ENCODE measurements at regions of chr4 and their contacts with region 1.

Region 1: GRCh38 chr4:69881173-69881773 is 21.3 kb upstream of the SULT1E1 start:
- DNase-seq: peak in 1 of 2 donors; percentile 64
- ATAC-seq: peak; percentile 84 to 98 (median 97)
- H3K4me3 ChIP-seq: no peak overlapping the region
- H3K4me3 Mint-ChIP-seq: no peak overlapping the region
- H3K27ac ChIP-seq: no peak overlapping the region
- H3K27ac Mint-ChIP-seq: no peak overlapping the region
- H3K4me1 ChIP-seq: no peaks in the 10 kb centered on the region
- H3K4me1 Mint-ChIP-seq: no peaks in the 10 kb centered on the region
- H3K27me3 ChIP-seq: no peaks in the 10 kb centered on the region
- H3K27me3 Mint-ChIP-seq: peaks cover 0 to 2% of the 10 kb centered on the region in 2 donors
- CTCF ChIP-seq: peak; percentile 96

Region 2: DNA sequence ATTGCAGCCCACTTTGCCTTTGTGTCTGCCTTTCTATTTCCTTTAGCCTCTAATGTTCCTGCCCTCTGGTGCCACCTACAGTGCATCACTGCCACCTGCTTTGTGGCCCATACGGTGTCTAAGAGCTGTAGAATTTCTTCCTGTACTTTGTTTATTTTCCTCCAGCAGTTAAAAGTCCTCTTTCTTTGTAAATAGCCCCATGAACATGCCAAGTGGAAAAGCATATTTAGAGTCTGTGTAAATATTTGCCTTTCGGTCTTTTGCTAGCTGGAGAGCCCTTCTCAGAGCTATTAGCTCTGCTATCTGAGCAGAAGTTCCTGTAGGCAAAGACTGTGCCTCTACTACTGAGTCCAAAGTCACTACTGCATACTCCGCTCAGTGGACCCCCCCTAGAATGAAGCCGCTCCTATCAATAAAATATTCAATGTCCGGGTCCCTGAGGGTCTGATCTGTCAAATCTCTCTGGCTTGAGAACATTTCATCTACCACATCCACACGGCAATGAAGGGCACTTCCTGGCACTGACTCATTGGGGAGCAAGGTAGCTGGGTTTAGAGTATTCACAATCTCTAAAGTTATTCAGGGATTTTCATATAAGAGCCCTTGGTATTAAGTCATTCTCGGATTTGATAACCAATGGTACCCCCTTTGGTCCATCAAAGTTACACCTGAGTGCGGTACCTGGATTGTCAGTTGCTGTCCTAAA is 57.6 kb before region 1 on chr4:
- intact Hi-C with region 1: loop called (anchors 2 kb)
- DNase-seq: peak in 1 of 2 donors; percentile 72
- ATAC-seq: peak; percentile 84 to 99 (median 97)
- H3K4me3 ChIP-seq: no peak overlapping the region
- H3K4me3 Mint-ChIP-seq: no peak overlapping the region
- H3K27ac ChIP-seq: no peak overlapping the region
- H3K27ac Mint-ChIP-seq: peak overlapping the region in 1 of 2 donors; percentile 46
- H3K4me1 ChIP-seq: peaks cover 20% of the 10 kb centered on the region
- H3K4me1 Mint-ChIP-seq: peaks cover 21 to 28% of the 10 kb centered on the region in 2 donors
- H3K27me3 ChIP-seq: no peaks in the 10 kb centered on the region
- H3K27me3 Mint-ChIP-seq: no peaks in the 10 kb centered on the region
- CTCF ChIP-seq: peak; percentile 68

Region 3: GRCh38 chr4:69977567-69977966 is 96.3 kb after region 1 on chr4:
- intact Hi-C with region 1: no loop called
- DNase-seq: no peak
- ATAC-seq: no peak
- H3K4me3 ChIP-seq: no peak overlapping the region
- H3K4me3 Mint-ChIP-seq: no peak overlapping the region
- H3K27ac ChIP-seq: no peak overlapping the region
- H3K27ac Mint-ChIP-seq: no peak overlapping the region
- H3K4me1 ChIP-seq: no peaks in the 10 kb centered on the region
- H3K4me1 Mint-ChIP-seq: no peaks in the 10 kb centered on the region
- H3K27me3 ChIP-seq: no peaks in the 10 kb centered on the region
- H3K27me3 Mint-ChIP-seq: no peaks in the 10 kb centered on the region
- CTCF ChIP-seq: no peak